GM12878 (cell line): ENCODE measurements at regions of chr1 and their contacts with region 1.

Region 1: GRCh38 chr1:227901906-227902645 is 45.7 kb downstream of the WNT9A start:
- DNase-seq: no peak
- ATAC-seq: peak; percentile 23; the same call in 2 of the 3 replicates
- H3K4me3 ChIP-seq: no peak overlapping the region
- H3K27ac ChIP-seq: no peak overlapping the region
- H3K4me1 ChIP-seq: no peaks in the 10 kb centered on the region
- H3K27me3 ChIP-seq: no peaks in the 10 kb centered on the region
- CTCF ChIP-seq: no peak
- EP300 ChIP-seq: no peak
- POLR2A ChIP-seq: no peak
- RAD21 ChIP-seq: no peak

Region 2: GRCh38 chr1:227844320-227845146 is 57.5 kb before region 1 on chr1:
- CTCF ChIA-PET with region 1: no interaction called
- POLR2A ChIA-PET with region 1: no interaction called
- RAD21 ChIA-PET with region 1: no interaction called
- SMC1A ChIA-PET with region 1: no interaction called
- in situ Hi-C with region 1: no loop called
- intact Hi-C with region 1: loop called (anchors 10 kb)
- DNase-seq: no peak
- ATAC-seq: no peak
- H3K4me3 ChIP-seq: no peak overlapping the region
- H3K27ac ChIP-seq: no peak overlapping the region
- H3K4me1 ChIP-seq: no peaks in the 10 kb centered on the region
- H3K27me3 ChIP-seq: no peaks in the 10 kb centered on the region
- CTCF ChIP-seq: no peak
- EP300 ChIP-seq: no peak
- POLR2A ChIP-seq: no peak
- RAD21 ChIP-seq: no peak

Region 3: DNA sequence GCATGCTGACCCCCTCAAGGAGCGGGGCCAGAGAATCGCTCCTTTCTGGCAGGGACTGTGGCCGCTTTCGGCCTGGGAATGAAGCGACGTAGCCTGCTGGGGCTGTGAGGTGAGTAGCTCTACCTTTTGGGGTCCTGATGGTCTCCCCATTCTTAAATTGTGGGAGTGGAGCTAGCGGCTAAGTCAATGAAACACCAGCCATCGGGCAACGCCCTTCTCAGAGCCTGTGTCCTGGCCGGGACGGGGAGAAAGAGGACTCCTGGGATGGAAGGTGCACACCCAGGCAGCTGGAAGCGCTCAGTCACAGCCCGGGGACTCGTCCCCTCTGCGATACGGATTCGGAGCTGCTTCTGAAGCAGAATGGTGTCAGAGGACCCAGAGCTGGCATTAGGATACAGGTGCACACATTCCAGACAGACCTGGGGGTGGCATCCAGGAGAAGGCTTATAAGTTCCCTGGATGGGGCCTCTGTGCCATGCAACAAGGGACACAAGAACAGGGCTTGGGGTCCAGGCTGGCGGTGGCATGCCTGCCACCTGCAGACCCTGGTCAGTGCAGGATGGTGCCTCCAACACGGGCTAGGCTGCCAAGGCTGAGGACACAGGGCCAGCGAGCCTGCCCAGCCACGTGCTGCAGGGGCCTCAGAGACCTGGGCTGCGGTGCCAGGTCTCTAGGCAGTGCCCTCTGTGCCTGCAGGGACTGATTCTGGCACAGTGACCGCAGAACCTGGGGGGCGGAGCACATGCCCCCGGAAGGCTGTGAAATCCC is 46.6 kb after region 1 on chr1:
- CTCF ChIA-PET with region 1: no interaction called
- POLR2A ChIA-PET with region 1: no interaction called
- RAD21 ChIA-PET with region 1: no interaction called
- SMC1A ChIA-PET with region 1: no interaction called
- in situ Hi-C with region 1: no loop called
- intact Hi-C with region 1: no loop called
- DNase-seq: no peak
- ATAC-seq: no peak
- H3K4me3 ChIP-seq: no peak overlapping the region
- H3K27ac ChIP-seq: no peak overlapping the region
- H3K4me1 ChIP-seq: no peaks in the 10 kb centered on the region
- H3K27me3 ChIP-seq: peaks cover 7 to 10% of the 10 kb centered on the region in 2 experiments
- CTCF ChIP-seq: no peak
- EP300 ChIP-seq: no peak
- POLR2A ChIP-seq: no peak
- RAD21 ChIP-seq: no peak

Region 4: DNA sequence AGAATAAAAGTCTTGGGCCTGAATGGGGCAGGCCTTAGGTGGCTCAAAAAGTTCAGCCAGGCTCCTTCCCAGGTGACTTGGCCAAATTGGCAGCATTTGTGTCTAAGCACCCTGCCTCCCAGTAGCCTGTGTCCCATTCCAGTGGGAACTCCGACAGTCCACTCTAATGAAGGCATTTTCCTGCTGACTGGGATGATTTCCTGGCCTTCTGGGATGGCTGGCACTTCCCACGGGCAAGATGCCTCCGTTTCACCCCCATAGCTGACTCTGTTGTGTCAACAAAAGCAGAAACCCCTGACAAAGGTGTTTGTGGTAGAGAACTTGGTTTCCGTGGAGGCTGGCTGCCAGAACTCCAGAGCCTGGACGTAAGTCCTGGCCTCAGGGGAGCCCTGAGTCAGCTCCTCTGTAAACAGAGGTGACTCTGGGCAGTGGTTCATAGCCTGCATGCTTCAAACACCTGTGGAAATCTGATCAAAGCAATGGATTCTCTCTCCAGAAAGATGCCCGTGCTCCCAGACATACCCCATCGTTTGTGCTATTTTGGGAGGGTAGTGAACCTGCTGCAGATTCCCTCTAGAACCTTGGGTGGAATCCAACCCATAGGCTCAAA is 141.3 kb after region 1 on chr1:
- CTCF ChIA-PET with region 1: no interaction called
- POLR2A ChIA-PET with region 1: no interaction called
- RAD21 ChIA-PET with region 1: no interaction called
- SMC1A ChIA-PET with region 1: no interaction called
- in situ Hi-C with region 1: no loop called
- intact Hi-C with region 1: no loop called
- DNase-seq: no peak
- ATAC-seq: no peak
- H3K4me3 ChIP-seq: no peak overlapping the region
- H3K27ac ChIP-seq: no peak overlapping the region
- H3K4me1 ChIP-seq: no peaks in the 10 kb centered on the region
- H3K27me3 ChIP-seq: peaks cover 5 to 10% of the 10 kb centered on the region in 2 experiments; a peak in 3 of 4 replicates
- CTCF ChIP-seq: no peak
- EP300 ChIP-seq: no peak
- POLR2A ChIP-seq: no peak
- RAD21 ChIP-seq: no peak